PC-9 (cell line): ENCODE measurements at regions of chr7 and their contacts with region 1.

Region 1: GRCh38 chr7:84393786-84394185 is 199.2 kb upstream of the SEMA3A start:
- DNase-seq: no peak
- H3K4me3 ChIP-seq: no peak overlapping the region
- H3K27ac ChIP-seq: no peak overlapping the region
- H3K4me1 ChIP-seq: no peaks in the 10 kb centered on the region
- H3K27me3 ChIP-seq: no peaks in the 10 kb centered on the region
- CTCF ChIP-seq: no peak

Region 2: DNA sequence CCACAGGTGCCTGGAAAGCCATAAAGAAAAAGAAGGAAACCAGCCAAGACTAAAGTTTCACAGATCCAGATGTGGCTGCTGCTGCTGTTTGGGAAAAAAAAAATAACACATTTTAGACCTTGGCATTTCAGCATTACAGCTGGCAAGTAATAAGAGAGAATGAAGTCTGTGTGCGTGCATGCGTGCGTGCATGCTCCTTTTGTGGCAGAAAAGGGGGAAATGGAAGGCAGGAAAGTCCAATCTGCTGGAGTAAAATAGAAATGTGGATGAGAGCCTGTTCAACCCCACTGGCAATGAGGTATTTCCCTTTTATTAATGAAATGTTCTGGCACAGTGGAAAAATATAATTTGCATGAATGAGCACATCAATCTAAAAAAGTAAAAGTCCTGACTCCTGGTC is 62.2 kb before region 1 on chr7:
- CTCF ChIA-PET with region 1: no interaction called
- POLR2A ChIA-PET with region 1: no interaction called
- intact Hi-C with region 1: no loop called
- DNase-seq: no peak
- H3K4me3 ChIP-seq: no peak overlapping the region
- H3K27ac ChIP-seq: no peak overlapping the region
- H3K4me1 ChIP-seq: no peaks in the 10 kb centered on the region
- H3K27me3 ChIP-seq: no peaks in the 10 kb centered on the region
- CTCF ChIP-seq: no peak

Region 3: DNA sequence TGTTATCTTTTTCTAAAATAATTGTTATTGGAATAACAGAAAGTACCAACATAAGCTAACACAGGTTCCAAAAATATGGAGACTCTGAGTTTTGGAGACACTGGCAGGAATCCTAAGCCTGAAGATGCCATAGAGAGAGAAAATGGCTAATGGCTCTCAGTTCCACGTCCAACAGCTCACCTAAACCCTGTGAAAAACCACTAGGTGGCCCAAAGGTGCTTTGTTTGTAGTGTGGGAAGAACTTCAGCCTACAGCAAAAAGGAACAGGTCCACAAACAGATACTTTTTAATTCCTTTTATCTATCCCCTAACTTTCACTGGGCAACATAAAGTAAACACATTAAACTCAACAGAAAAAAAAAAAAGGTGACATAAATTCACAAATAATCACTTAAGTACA is 520.8 kb after region 1 on chr7:
- CTCF ChIA-PET with region 1: no interaction called
- POLR2A ChIA-PET with region 1: interaction called, 11 read pairs
- intact Hi-C with region 1: no loop called
- DNase-seq: no peak
- H3K4me3 ChIP-seq: no peak overlapping the region
- H3K27ac ChIP-seq: no peak overlapping the region
- H3K4me1 ChIP-seq: no peaks in the 10 kb centered on the region; the same call in 1 of the 2 replicates
- H3K27me3 ChIP-seq: no peaks in the 10 kb centered on the region
- CTCF ChIP-seq: no peak